IMR-90 (cell line): ENCODE measurements at regions of chr5 and their contacts with region 1.

Region 1: DNA sequence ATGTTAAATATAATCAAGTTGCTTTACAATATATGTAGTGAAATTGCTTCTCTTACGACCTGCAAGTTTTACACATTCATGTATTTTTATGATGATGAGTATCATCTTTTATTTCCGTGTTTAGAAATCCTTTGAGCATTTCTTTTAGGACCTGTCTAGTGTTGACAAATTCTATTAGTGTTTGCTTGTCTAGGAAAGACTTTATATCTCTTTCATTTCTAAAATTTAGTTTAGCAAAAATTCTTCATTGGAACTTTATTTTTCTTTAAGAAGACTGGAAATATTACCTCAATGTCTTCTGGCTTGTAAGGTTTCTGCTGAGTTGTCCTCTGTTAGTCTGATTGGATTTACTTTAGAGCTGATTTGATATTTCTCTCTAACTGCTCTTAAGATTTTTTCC is 920.9 kb upstream of the CTNND2 start:
- DNase-seq: no peak
- ATAC-seq: no peak
- H3K4me3 ChIP-seq: no peak overlapping the region
- H3K27ac ChIP-seq: no peak overlapping the region
- H3K4me1 ChIP-seq: no peaks in the 10 kb centered on the region
- H3K27me3 ChIP-seq: no peaks in the 10 kb centered on the region
- CTCF ChIP-seq: no peak
- POLR2A ChIP-seq: no peak
- RAD21 ChIP-seq: no peak

Region 2: GRCh38 chr5:12624776-12625560 is 200.2 kb before region 1 on chr5:
- CTCF ChIA-PET with region 1: no interaction called
- POLR2A ChIA-PET with region 1: no interaction called
- dilution Hi-C with region 1: no loop called
- in situ Hi-C with region 1: no loop called
- intact Hi-C with region 1: no loop called
- DNase-seq: no peak
- ATAC-seq: no peak
- H3K4me3 ChIP-seq: no peak overlapping the region
- H3K27ac ChIP-seq: no peak overlapping the region
- H3K4me1 ChIP-seq: no peaks in the 10 kb centered on the region
- H3K27me3 ChIP-seq: no peaks in the 10 kb centered on the region
- CTCF ChIP-seq: no peak
- POLR2A ChIP-seq: no peak
- RAD21 ChIP-seq: no peak

Region 3: GRCh38 chr5:12805165-12805707 is 19.9 kb before region 1 on chr5:
- CTCF ChIA-PET with region 1: no interaction called
- POLR2A ChIA-PET with region 1: no interaction called
- dilution Hi-C with region 1: no loop called
- in situ Hi-C with region 1: no loop called
- intact Hi-C with region 1: loop called (anchors 1 kb)
- DNase-seq: no peak
- ATAC-seq: no peak
- H3K4me3 ChIP-seq: no peak overlapping the region
- H3K27ac ChIP-seq: no peak overlapping the region
- H3K4me1 ChIP-seq: no peaks in the 10 kb centered on the region
- H3K27me3 ChIP-seq: no peaks in the 10 kb centered on the region
- CTCF ChIP-seq: no peak
- POLR2A ChIP-seq: no peak
- RAD21 ChIP-seq: no peak